Upper lobe of right lung (tissue), 1 donor: ENCODE measurements at regions of chr1 and their contacts with region 1.

Region 1: DNA sequence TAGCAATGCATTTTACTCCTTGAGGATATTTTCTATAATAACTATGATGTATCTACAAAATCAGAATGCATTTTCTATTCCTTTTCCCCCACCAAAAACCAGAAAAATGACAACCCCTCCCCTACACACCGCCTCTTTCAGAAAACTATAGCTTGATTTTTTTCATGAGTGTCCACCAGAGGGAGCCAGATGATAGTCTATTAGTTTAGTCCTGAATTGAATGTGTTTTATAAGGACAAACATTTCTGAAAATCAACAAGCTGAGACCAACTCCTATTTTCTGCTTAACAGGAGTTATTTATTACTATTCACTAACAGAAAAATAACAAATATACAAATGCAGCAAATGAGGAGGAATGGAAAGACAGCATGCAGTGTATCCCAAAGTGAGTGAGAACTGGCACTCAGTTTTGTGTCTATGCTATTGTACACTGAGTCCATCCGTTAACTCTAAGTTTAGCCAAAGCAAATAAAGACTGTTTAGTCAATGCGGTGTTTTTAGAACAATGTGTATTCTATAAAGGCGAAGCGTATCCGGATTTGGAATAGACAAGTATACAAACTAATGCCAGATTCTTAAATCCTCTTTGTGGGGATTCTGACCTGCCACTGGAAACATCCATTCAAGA is 182.6 kb downstream of the VAV3 start:
- DNase-seq: no peak
- ATAC-seq: peak; percentile 76
- H3K4me3 ChIP-seq: no peak overlapping the region
- H3K27ac ChIP-seq: no peak overlapping the region
- H3K4me1 ChIP-seq: peaks cover 8% of the 10 kb centered on the region
- H3K27me3 ChIP-seq: no peaks in the 10 kb centered on the region
- CTCF ChIP-seq: peak; percentile 72

Region 2: DNA sequence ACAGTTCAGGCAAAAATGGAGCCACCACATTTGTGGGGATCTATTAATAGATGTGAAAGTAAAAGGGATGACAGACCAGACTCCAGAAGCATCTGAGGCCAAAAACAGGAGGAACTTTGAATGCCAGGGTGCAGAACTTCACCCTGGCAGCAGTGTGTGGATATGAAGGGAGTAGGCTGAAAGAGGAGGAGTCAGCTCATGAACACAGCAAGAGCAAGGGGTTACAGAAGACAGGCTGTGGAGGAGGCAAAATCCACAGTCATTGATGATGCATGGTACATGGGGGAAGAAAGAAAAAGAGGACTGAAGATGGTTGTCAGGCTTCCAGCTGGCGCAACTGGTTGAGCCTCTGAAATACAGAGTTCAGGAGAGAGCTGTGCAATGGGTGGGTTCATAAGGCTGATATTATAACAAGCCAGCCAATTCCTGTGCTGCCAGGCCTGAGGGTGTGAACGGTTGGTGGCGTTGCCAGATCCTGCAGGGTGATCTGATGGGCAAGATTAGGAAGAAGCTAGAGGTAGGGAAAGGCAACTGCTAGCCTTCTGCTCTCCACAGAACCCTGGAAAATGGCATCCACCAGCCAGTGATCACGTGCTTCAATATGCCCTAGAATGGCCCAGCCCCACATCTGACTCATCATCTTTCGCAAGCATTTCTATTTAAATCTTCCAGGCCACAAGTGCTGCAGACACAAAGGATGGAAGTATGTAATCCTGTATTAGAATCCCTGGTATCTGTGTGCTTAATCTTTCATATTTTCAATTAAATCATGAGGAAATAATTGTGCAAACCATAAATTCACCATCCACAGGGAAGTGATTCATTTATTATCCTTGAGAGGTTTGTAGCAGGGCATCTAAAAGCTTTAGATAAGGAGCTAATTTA is 335.9 kb after region 1 on chr1:
- intact Hi-C with region 1: loop called (anchors 5 kb)
- DNase-seq: no peak
- ATAC-seq: peak; percentile 7
- H3K4me3 ChIP-seq: no peak overlapping the region
- H3K27ac ChIP-seq: no peak overlapping the region
- H3K4me1 ChIP-seq: no peaks in the 10 kb centered on the region
- H3K27me3 ChIP-seq: no peaks in the 10 kb centered on the region
- CTCF ChIP-seq: no peak

Region 3: GRCh38 chr1:108125312-108126138 is 343.2 kb after region 1 on chr1:
- intact Hi-C with region 1: loop called (anchors 5 kb)
- DNase-seq: no peak
- ATAC-seq: peak; percentile 97
- H3K4me3 ChIP-seq: no peak overlapping the region
- H3K27ac ChIP-seq: no peak overlapping the region
- H3K4me1 ChIP-seq: no peaks in the 10 kb centered on the region
- H3K27me3 ChIP-seq: no peaks in the 10 kb centered on the region
- CTCF ChIP-seq: peak; percentile 95